ENCODE measurements at regions of chr1 and their contacts with region 1.

Region 1: GRCh38 chr1:48356901-48357300 is 115.1 kb downstream of the SPATA6 start:
- DNase-seq: no peak
- H3K4me3 ChIP-seq: no peak overlapping the region
- H3K27ac ChIP-seq: no peak overlapping the region
- H3K27me3 ChIP-seq: no peaks in the 10 kb centered on the region
- CTCF ChIP-seq: 0 out of 2 replicates have a peak, but pooled peaks have one; percentile 13

Region 2: GRCh38 chr1:48309564-48310082 is 47.3 kb before region 1 on chr1:
- CTCF ChIA-PET with region 1: interaction called, 12 read pairs
- POLR2A ChIA-PET with region 1: no interaction called
- DNase-seq: no peak
- H3K4me3 ChIP-seq: no peak overlapping the region
- H3K27ac ChIP-seq: no peak overlapping the region
- H3K27me3 ChIP-seq: no peaks in the 10 kb centered on the region
- CTCF ChIP-seq: no peak

Region 3: GRCh38 chr1:48556186-48556850 is 199.4 kb after region 1 on chr1:
- CTCF ChIA-PET with region 1: no interaction called
- POLR2A ChIA-PET with region 1: no interaction called
- DNase-seq: no peak
- H3K4me3 ChIP-seq: no peak overlapping the region
- H3K27ac ChIP-seq: no peak overlapping the region
- H3K27me3 ChIP-seq: no peaks in the 10 kb centered on the region
- CTCF ChIP-seq: no peak

Measured in AG04450 (cell line).